ENCODE measurements at regions of chr14 and their contacts with region 1.

Region 1: GRCh38 chr14:68795597-68796417 is 2.9 kb upstream of the ZFP36L1 start:
- DNase-seq: peak; percentile 90
- ATAC-seq: peak; percentile 53
- H3K4me3 Mint-ChIP-seq: peak overlapping the region; percentile 90
- H3K27ac Mint-ChIP-seq: peak overlapping the region; percentile 100
- H3K4me1 Mint-ChIP-seq: peaks cover 51% of the 10 kb centered on the region
- H3K27me3 Mint-ChIP-seq: no peaks in the 10 kb centered on the region

Region 2: GRCh38 chr14:67599698-67600561 is 1195.9 kb before region 1 on chr14 and contains the start of gene PIGH:
- CTCF ChIA-PET with region 1: no interaction called
- POLR2A ChIA-PET with region 1: no interaction called
- intact Hi-C with region 1: loop called in 1 of 2 experiments (anchors 10 kb)
- DNase-seq: peak; percentile 97
- ATAC-seq: peak; percentile 99
- H3K4me3 Mint-ChIP-seq: peak within 1 kb of the TSS; percentile 94
- H3K27ac Mint-ChIP-seq: peak within 1 kb of the TSS; percentile 94
- H3K4me1 Mint-ChIP-seq: peaks cover 34% of the 10 kb centered on the region
- H3K27me3 Mint-ChIP-seq: no peaks in the 10 kb centered on the region
- total RNA-seq, gene PIGH: 14.9 to 21.4 TPM

Region 3: GRCh38 chr14:68210729-68211299 is 585.0 kb before region 1 on chr14:
- CTCF ChIA-PET with region 1: interaction called, 3 read pairs
- POLR2A ChIA-PET with region 1: interaction called, 8 read pairs
- intact Hi-C with region 1: loop called (anchors 1 to 2 kb)
- DNase-seq: peak; percentile 71
- ATAC-seq: peak; percentile 93
- H3K4me3 Mint-ChIP-seq: peak overlapping the region; percentile 43
- H3K27ac Mint-ChIP-seq: peak overlapping the region; percentile 84
- H3K4me1 Mint-ChIP-seq: peaks cover 53% of the 10 kb centered on the region
- H3K27me3 Mint-ChIP-seq: no peaks in the 10 kb centered on the region

Region 4: GRCh38 chr14:68369281-68370056 is 426.3 kb before region 1 on chr14:
- CTCF ChIA-PET with region 1: no interaction called
- POLR2A ChIA-PET with region 1: no interaction called
- intact Hi-C with region 1: loop called in 1 of 2 experiments (anchors 5 kb)
- DNase-seq: peak; percentile 20
- ATAC-seq: peak; percentile 94
- H3K4me3 Mint-ChIP-seq: no peak overlapping the region
- H3K27ac Mint-ChIP-seq: peak overlapping the region; percentile 55
- H3K4me1 Mint-ChIP-seq: peaks cover 46% of the 10 kb centered on the region
- H3K27me3 Mint-ChIP-seq: no peaks in the 10 kb centered on the region

Region 5: GRCh38 chr14:68621400-68622365 is 174.1 kb before region 1 on chr14:
- CTCF ChIA-PET with region 1: no interaction called
- POLR2A ChIA-PET with region 1: no interaction called
- intact Hi-C with region 1: no loop called
- DNase-seq: no peak
- ATAC-seq: no peak
- H3K4me3 Mint-ChIP-seq: no peak overlapping the region
- H3K27ac Mint-ChIP-seq: no peak overlapping the region
- H3K4me1 Mint-ChIP-seq: peaks cover 2% of the 10 kb centered on the region
- H3K27me3 Mint-ChIP-seq: no peaks in the 10 kb centered on the region

Region 6: DNA sequence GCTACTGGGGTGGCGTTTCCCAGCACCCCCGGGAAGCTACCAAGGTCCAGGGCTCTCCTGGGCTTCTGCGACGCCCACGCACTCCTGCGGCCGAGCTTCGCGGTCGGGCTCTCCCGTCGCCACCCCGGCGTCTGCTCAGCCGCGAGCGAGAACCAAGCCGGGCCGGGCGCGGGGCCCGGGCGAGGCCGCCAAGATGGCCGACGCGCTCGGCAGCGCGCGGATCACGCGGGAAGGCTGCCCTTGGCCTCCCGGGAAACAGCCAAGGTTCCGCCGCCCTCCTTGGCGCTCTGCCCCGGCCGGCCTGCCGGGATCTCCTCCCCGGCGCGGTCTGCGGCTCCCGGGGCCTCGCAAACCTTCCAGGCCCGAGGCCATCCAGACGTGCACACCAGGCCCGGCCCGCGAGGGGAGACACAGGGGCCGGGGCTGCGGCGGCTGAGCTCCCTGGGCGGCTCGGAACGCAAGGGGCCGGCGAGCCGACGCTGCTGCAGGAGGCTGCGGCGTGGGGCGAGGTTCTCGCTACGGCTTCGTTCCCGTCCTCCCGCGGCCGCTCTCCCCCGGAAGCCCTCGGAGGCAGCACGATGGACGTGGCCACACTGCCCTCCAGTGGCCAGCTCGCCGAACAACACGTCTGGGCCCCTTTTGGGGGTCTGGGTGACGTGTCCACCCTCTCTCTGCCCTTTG is 20.6 kb after region 1 on chr14:
- CTCF ChIA-PET with region 1: interaction called, 44 read pairs
- POLR2A ChIA-PET with region 1: interaction called, 68 read pairs
- intact Hi-C with region 1: loop called (anchors 1 kb)
- DNase-seq: peak; percentile 93
- ATAC-seq: peak; percentile 72
- H3K4me3 Mint-ChIP-seq: peak overlapping the region; percentile 74
- H3K27ac Mint-ChIP-seq: peak overlapping the region; percentile 94
- H3K4me1 Mint-ChIP-seq: peaks cover 69% of the 10 kb centered on the region
- H3K27me3 Mint-ChIP-seq: no peaks in the 10 kb centered on the region

Region 7: GRCh38 chr14:69153131-69153872 is 357.5 kb after region 1 on chr14:
- CTCF ChIA-PET with region 1: no interaction called
- POLR2A ChIA-PET with region 1: no interaction called
- intact Hi-C with region 1: loop called in 1 of 2 experiments (anchors 2 kb)
- DNase-seq: peak; percentile 96
- ATAC-seq: peak; percentile 93
- H3K4me3 Mint-ChIP-seq: peak overlapping the region; percentile 83
- H3K27ac Mint-ChIP-seq: peak overlapping the region; percentile 81
- H3K4me1 Mint-ChIP-seq: peaks cover 30% of the 10 kb centered on the region
- H3K27me3 Mint-ChIP-seq: no peaks in the 10 kb centered on the region

Region 8: GRCh38 chr14:69685716-69686115 is 889.9 kb after region 1 on chr14:
- CTCF ChIA-PET with region 1: no interaction called
- POLR2A ChIA-PET with region 1: no interaction called
- intact Hi-C with region 1: loop called in 1 of 2 experiments (anchors 10 kb)
- DNase-seq: peak; percentile 78
- ATAC-seq: peak; percentile 74
- H3K4me3 Mint-ChIP-seq: peak overlapping the region; percentile 49
- H3K27ac Mint-ChIP-seq: peak overlapping the region; percentile 94
- H3K4me1 Mint-ChIP-seq: peaks cover 81% of the 10 kb centered on the region
- H3K27me3 Mint-ChIP-seq: no peaks in the 10 kb centered on the region

Measured in activated CD4-positive, alpha-beta T cell treated with anti-CD3 and anti-CD28 coated beads for 36 hours (primary cell).